ENCODE measurements at regions of chr6 and their contacts with region 1.

Region 1: DNA sequence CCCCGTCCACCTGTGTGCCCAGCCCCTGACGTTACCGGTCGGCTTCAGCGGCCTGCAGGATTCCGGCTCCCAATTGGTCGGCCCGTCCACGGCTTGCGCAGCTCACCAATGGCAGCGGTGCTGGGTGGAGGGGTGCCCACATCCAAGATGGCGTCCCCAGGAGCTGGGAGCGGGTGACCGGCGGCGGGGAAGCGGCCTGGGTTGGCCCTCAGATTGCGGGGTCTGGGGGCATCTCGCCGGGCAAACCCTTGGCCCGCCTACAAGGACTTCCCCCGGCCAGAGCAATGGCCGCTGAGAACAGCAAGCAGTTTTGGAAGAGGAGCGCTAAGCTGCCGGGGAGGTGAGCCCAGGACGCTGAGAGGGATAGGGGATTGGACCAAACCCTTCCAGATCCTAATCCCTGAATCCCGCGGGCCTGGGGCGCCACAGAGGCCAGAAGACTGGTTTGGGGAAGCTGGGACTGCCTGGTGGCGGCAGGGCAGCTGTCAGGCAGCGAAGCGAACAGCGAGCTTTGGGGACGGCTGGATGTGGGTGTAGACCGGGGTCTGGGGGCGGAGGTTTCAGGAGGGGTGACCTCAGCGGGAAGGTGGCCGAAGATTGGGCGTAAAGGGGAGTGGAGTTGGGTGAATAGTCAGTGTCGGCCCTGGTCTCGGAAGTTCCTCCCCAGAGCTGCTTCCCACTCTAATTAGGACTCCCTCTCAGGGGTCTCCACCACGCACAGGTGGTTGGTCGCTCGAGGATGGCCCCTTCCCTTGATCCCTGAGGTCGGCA is at the starts of genes TBC1D22B and TMEM217:
- DNase-seq: peak; percentile 97
- H3K4me3 ChIP-seq: peak within 1 kb of the TSS; percentile 69 to 89 (median 79)
- H3K27ac ChIP-seq: peak within 1 kb of the TSS; percentile 88
- H3K4me1 ChIP-seq: peaks cover 16% of the 10 kb centered on the region
- H3K27me3 ChIP-seq: no peaks in the 10 kb centered on the region
- CTCF ChIP-seq: no peak
- total RNA-seq, gene TBC1D22B: 9.3 to 10.4 TPM
- total RNA-seq, gene TMEM217: 1.7 to 4.2 TPM

Region 2: GRCh38 chr6:36962874-36963273 is 294.9 kb before region 1 on chr6:
- CTCF ChIA-PET with region 1: no interaction called
- dilution Hi-C with region 1: no loop called
- in situ Hi-C with region 1: no loop called
- intact Hi-C with region 1: no loop called
- DNase-seq: no peak
- H3K4me3 ChIP-seq: no peak overlapping the region
- H3K27ac ChIP-seq: no peak overlapping the region
- H3K4me1 ChIP-seq: peaks cover 3% of the 10 kb centered on the region
- H3K27me3 ChIP-seq: no peaks in the 10 kb centered on the region
- CTCF ChIP-seq: no peak

Region 3: DNA sequence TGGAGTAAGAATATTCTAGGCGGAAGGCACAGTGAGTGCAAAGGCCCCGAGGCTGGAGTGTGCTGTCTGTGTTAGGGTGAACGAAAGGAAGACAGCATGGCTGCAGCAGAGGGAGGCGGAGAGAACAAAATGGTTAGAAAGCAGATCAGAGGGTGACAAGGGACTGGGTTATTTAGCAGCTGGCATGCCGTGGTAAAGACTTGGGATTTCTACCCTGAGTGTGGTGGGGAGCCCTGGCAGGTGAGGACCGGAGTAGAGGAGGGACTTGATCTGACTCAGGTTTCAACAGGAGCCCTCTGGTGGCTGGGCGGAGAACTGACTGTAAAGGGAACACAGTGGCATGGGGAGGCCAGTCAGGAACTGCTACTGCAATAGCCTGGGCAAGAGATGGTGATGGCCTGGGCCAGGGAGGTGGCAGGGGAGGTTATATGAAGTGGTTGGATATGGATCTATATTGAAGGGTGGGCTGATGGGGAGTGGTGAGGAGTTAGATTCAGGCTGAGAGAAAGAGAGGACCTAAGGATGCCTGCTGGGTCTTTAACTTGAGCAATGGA is 49.8 kb before region 1 on chr6:
- CTCF ChIA-PET with region 1: no interaction called
- dilution Hi-C with region 1: no loop called
- in situ Hi-C with region 1: no loop called
- intact Hi-C with region 1: loop called (anchors 1 kb)
- DNase-seq: peak; percentile 77
- H3K4me3 ChIP-seq: no peak overlapping the region
- H3K27ac ChIP-seq: no peak overlapping the region
- H3K4me1 ChIP-seq: peaks cover 7% of the 10 kb centered on the region
- H3K27me3 ChIP-seq: no peaks in the 10 kb centered on the region
- CTCF ChIP-seq: peak; percentile 86 to 91

Region 4: DNA sequence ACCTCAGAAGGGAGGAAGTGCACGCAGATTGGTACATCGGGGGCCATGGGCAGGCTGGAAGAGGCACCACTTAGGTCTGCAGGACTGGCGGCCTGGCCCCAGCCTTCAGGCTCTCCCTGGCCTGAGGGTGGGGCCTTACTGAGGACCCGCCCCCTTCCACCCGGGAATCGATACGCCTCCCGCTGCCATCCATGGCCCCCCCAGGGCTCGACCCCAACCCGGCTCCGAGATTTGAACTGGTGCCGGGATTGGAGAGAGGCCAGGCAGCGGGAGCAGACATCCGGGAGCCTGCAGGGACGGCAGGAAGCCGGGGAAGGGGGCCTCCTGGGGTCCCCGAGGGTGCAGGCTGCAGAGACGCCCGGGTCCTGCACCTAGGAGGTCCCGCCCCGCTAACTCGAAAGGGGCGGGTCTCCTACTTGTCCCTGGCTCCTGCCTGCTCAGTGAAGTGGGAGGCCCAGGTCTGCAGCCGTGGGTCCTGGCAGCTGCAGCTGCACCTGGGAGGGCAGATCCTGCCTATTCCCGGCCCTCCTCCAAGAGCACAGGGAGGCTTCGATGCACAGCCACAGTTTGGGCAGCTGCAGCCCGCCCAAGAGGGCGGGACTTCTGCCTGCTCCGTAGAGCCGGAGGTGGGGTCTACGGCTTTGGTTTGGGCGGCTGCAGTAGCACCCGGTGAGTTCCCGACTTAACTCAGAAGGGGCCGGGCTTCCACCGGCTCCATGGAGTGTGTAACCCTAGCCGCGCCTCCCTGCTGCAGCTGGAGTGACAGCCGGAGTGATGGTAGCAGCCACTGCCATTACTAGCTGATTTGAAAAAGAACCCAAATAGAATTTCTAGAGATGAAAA is 35.5 kb before region 1 on chr6:
- CTCF ChIA-PET with region 1: no interaction called
- dilution Hi-C with region 1: no loop called
- in situ Hi-C with region 1: no loop called
- intact Hi-C with region 1: loop called (anchors 1 kb)
- DNase-seq: peak; percentile 93
- H3K4me3 ChIP-seq: peak overlapping the region; percentile 48 to 65 (median 51)
- H3K27ac ChIP-seq: no peak overlapping the region
- H3K4me1 ChIP-seq: no peaks in the 10 kb centered on the region
- H3K27me3 ChIP-seq: no peaks in the 10 kb centered on the region
- CTCF ChIP-seq: peak in 1 of 2 donors; percentile 13

Region 5: DNA sequence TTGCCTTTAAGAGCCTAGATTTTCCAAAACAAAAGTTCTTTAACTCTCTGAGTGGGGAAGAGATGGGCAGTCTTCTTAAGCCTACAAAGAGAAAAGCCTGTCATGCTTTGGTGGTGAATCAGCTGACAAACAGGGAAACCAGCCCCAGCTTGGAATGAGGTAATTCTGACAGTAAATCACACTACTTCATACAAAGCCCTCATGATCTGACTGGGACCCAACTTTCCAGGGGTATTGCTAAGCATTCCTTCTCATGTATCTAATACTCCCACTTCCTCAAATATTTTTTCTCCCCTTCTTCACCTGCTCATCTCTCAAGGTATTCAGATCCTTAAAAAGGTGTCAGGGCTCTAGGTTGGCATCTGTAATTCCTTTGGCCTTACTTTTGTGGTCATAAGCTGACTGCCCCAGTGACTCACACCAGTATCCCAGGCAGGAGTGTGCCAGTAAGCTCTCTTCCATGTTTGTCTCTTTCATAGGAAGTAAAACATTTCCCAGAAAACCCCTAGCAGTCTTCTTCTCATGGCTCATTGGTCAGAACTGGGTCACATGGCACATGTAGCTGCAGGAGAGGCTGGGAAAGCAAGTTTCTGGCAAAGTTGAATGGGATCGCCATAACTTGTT is 15.3 kb before region 1 on chr6:
- CTCF ChIA-PET with region 1: no interaction called
- dilution Hi-C with region 1: no loop called
- in situ Hi-C with region 1: no loop called
- intact Hi-C with region 1: loop called (anchors 1 kb)
- DNase-seq: peak; percentile 97
- H3K4me3 ChIP-seq: no peak overlapping the region
- H3K27ac ChIP-seq: peak overlapping the region; percentile 89
- H3K4me1 ChIP-seq: peaks cover 50% of the 10 kb centered on the region
- H3K27me3 ChIP-seq: no peaks in the 10 kb centered on the region
- CTCF ChIP-seq: no peak

Region 6: GRCh38 chr6:37547564-37548061 is 289.8 kb after region 1 on chr6:
- CTCF ChIA-PET with region 1: no interaction called
- dilution Hi-C with region 1: no loop called
- in situ Hi-C with region 1: no loop called
- intact Hi-C with region 1: no loop called
- DNase-seq: peak; percentile 91
- H3K4me3 ChIP-seq: no peak overlapping the region
- H3K27ac ChIP-seq: no peak overlapping the region
- H3K4me1 ChIP-seq: peaks cover 24% of the 10 kb centered on the region
- H3K27me3 ChIP-seq: no peaks in the 10 kb centered on the region
- CTCF ChIP-seq: no peak

Measured in mammary epithelial cell (primary cell).